OCI-LY7 (cell line): ENCODE measurements at regions of chrX and their contacts with region 1.

Region 1: GRCh38 chrX:120749141-120749846 is 119.4 kb upstream of the C1GALT1C1 start:
- DNase-seq: peak; percentile 87
- H3K4me3 ChIP-seq: peak overlapping the region; percentile 71
- H3K27ac ChIP-seq: peak overlapping the region; percentile 96
- H3K4me1 ChIP-seq: peaks cover 62% of the 10 kb centered on the region
- CTCF ChIP-seq: no peak

Region 2: GRCh38 chrX:120726294-120726693 is 23.0 kb before region 1 on chrX:
- CTCF ChIA-PET with region 1: no interaction called
- POLR2A ChIA-PET with region 1: interaction called, 42 read pairs
- intact Hi-C with region 1: loop called (anchors 1 kb)
- DNase-seq: peak; percentile 83
- H3K4me3 ChIP-seq: peak overlapping the region; percentile 33
- H3K27ac ChIP-seq: peak overlapping the region; percentile 93
- H3K4me1 ChIP-seq: peaks cover 35% of the 10 kb centered on the region
- CTCF ChIP-seq: no peak

Region 3: GRCh38 chrX:120736989-120737388 is 12.3 kb before region 1 on chrX:
- CTCF ChIA-PET with region 1: no interaction called
- POLR2A ChIA-PET with region 1: interaction called, 16 read pairs
- intact Hi-C with region 1: no loop called
- DNase-seq: no peak
- H3K4me3 ChIP-seq: no peak overlapping the region
- H3K27ac ChIP-seq: no peak overlapping the region
- H3K4me1 ChIP-seq: peaks cover 4% of the 10 kb centered on the region
- CTCF ChIP-seq: no peak